ENCODE measurements at regions of chr16 and their contacts with region 1.

Region 1: DNA sequence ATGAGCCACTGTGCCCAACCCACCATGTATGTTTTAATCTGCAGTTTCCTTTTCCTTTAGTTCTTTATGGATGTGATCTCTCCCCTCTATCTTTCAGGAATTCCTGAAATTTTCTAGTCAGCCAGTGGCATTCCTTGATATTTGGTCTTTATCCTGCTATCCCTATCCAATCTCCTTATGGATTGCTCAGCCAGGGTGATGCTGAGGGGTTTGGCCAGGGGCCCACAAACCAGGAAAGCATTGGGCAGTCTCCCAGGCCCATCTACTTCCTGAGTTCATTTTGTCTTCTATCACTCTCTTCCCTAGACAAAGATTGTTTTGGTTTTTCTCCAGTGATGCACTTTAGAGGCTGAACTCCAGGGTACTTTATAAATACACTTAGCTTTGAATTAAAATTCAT is 115.9 kb downstream of the KATNIP start:
- DNase-seq: no peak
- ATAC-seq: no peak
- H3K4me3 ChIP-seq: no peak overlapping the region
- H3K27ac ChIP-seq: no peak overlapping the region
- H3K4me1 ChIP-seq: no peaks in the 10 kb centered on the region
- H3K27me3 ChIP-seq: no peaks in the 10 kb centered on the region
- CTCF ChIP-seq: no peak

Region 2: DNA sequence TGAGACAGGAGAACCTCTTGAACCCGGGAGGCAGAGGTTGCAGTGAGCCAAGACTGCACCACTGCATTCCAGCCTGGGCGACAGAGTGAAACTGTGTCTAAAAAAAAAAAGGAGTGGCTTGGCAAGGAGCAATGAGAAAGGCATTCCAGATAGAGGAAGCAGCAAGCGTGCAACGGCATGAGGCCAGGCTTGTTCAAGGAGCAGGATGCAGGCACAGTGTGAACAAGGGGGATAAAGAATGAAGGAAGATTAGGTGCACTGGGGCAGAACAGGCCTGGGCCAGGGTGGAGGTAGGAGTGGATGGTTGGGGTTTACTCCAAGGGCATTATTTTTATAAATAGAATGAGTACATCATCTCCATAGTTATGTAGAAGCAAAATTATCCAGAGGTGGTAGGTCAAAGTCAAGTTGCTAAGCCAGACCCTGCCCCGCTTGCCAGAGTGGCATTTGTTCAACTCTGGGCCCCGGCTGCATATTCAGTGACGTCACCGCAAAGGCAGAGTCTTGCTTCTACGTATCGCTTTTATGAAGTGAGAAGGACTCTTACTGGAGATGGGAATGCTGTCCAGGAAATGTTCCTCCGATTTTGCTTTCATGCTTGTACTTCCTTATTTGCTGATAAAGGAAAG is 15.7 kb before region 1 on chr16:
- CTCF ChIA-PET with region 1: no interaction called
- POLR2A ChIA-PET with region 1: interaction called, 12 read pairs
- in situ Hi-C with region 1: no loop called
- intact Hi-C with region 1: no loop called
- DNase-seq: no peak
- ATAC-seq: no peak
- H3K4me3 ChIP-seq: no peak overlapping the region
- H3K27ac ChIP-seq: no peak overlapping the region
- H3K4me1 ChIP-seq: no peaks in the 10 kb centered on the region
- H3K27me3 ChIP-seq: no peaks in the 10 kb centered on the region
- CTCF ChIP-seq: no peak